ENCODE measurements at regions of chr10 and their contacts with region 1.

Region 1: GRCh38 chr10:128035557-128035973 is 90.7 kb downstream of the MKI67 start:
- DNase-seq: peak; percentile 82
- ATAC-seq: peak; percentile 94
- H3K4me3 Mint-ChIP-seq: no peak overlapping the region
- H3K27ac Mint-ChIP-seq: no peak overlapping the region
- H3K4me1 Mint-ChIP-seq: peaks cover 15% of the 10 kb centered on the region
- H3K27me3 Mint-ChIP-seq: no peaks in the 10 kb centered on the region
- CTCF ChIP-seq: peak; percentile 73

Region 2: DNA sequence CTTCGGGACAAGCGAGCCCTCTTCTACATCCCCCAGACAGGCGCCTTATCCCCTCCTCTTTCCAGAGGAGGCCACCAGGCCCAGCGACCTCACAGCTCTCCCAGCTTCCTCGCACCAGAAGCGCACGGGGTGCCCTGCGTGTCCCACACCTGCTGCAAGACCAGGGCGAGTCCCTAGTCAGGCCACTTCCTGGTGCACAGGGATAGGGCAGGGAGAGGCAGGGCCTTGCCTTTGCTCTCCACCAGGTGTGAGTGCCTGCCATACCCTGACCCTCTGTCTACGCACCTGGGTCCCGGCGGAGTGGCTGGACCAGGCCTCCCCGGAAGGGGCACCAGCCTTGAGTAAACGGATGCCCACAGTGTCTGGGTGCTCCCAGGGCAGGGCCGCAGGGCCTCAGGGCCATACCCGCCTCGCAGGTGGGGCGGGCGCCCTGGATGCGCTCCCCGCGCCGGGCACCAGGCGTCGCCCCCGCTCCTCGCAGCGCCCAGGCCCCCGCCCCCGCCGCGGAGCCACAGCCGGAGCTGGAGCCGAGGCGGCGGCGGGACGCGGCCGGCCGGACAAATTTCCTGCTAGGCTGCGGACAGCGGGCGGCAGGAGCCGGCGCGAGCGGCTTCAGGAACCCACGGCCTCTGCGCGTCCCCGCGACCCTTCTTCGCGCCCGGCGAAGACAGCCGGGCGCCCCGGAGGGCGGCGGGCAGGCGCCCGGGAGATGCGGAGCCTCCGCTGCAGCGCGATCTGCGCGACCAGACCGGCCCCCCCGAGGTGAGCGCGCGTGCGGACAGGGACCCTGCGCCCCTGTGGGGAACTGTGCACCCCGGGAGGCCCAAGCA is 128.8 kb before region 1 on chr10 and contains the start of gene PTPRE:
- CTCF ChIA-PET with region 1: interaction called, 11 read pairs
- POLR2A ChIA-PET with region 1: no interaction called
- DNase-seq: peak; percentile 76
- ATAC-seq: peak; percentile 94
- H3K4me3 Mint-ChIP-seq: peak within 1 kb of the TSS; percentile 52
- H3K27ac Mint-ChIP-seq: no peak within 1 kb of the TSS
- H3K4me1 Mint-ChIP-seq: peaks cover 3% of the 10 kb centered on the region
- H3K27me3 Mint-ChIP-seq: peaks cover 23% of the 10 kb centered on the region
- CTCF ChIP-seq: peak; percentile 65; the same call in 1 of the 2 replicates
- total RNA-seq, gene PTPRE: 1.7 to 3.1 TPM (median 2.0 TPM) in 3 replicates

Region 3: GRCh38 chr10:127990846-127991542 is 44.6 kb before region 1 on chr10:
- CTCF ChIA-PET with region 1: no interaction called
- POLR2A ChIA-PET with region 1: no interaction called
- DNase-seq: no peak
- ATAC-seq: no peak
- H3K4me3 Mint-ChIP-seq: no peak overlapping the region
- H3K27ac Mint-ChIP-seq: no peak overlapping the region
- H3K4me1 Mint-ChIP-seq: peaks cover 6% of the 10 kb centered on the region; the same call in 1 of the 2 replicates
- H3K27me3 Mint-ChIP-seq: no peaks in the 10 kb centered on the region
- CTCF ChIP-seq: no peak

Region 4: DNA sequence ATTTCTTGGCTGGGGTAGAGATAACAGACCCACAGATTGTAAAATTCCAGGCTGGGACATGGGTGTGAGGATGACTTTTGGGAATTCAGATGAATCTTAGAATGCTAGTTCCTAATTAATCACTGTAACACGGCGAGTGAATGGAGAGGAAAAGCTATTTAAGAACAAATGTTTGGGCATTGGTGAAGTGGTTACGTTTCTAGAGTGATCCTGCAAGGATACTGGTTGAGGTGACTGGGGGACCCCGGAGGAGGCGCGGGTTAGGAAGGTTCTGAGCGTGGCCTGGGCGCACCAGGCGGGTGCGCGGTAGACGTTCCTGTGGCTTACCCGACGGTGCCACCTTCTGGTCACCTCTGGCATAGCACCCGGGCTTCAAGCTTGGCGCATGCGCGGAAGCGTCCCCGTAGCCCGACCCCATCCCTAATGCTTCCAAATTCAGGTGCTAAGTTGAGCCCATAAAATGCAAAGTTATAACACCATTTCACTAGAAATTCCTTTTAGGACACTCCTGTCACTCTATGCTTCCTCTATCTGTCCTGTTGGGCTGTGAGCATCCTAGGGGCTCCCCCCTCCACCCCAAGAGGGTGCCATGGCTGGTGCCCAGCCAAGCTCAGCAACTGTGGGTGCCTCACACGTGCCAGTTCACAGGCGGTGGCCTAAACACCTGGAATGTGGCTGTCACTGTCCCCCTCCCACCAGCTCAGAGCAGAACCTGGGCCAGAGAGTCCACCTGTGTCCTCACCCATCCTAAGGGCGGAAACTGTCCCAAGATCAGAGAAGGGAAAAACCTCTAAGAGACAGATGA is 24.2 kb before region 1 on chr10:
- CTCF ChIA-PET with region 1: interaction called, 17 read pairs
- POLR2A ChIA-PET with region 1: no interaction called
- DNase-seq: peak; percentile 88
- ATAC-seq: peak; percentile 93
- H3K4me3 Mint-ChIP-seq: peak overlapping the region; percentile 28; the same call in 1 of the 2 replicates
- H3K27ac Mint-ChIP-seq: no peak overlapping the region
- H3K4me1 Mint-ChIP-seq: peaks cover 2% of the 10 kb centered on the region; the same call in 1 of the 2 replicates
- H3K27me3 Mint-ChIP-seq: peaks cover 6% of the 10 kb centered on the region
- CTCF ChIP-seq: peak; percentile 97

Region 5: GRCh38 chr10:128047351-128047750 is 11.8 kb after region 1 on chr10:
- CTCF ChIA-PET with region 1: interaction called, 50 read pairs
- POLR2A ChIA-PET with region 1: interaction called, 3 read pairs
- DNase-seq: peak; percentile 65
- ATAC-seq: peak; percentile 99
- H3K4me3 Mint-ChIP-seq: no peak overlapping the region
- H3K27ac Mint-ChIP-seq: peak overlapping the region; percentile 45
- H3K4me1 Mint-ChIP-seq: peaks cover 9% of the 10 kb centered on the region
- H3K27me3 Mint-ChIP-seq: peaks cover 6% of the 10 kb centered on the region; the same call in 1 of the 2 replicates
- CTCF ChIP-seq: no peak

Region 6: DNA sequence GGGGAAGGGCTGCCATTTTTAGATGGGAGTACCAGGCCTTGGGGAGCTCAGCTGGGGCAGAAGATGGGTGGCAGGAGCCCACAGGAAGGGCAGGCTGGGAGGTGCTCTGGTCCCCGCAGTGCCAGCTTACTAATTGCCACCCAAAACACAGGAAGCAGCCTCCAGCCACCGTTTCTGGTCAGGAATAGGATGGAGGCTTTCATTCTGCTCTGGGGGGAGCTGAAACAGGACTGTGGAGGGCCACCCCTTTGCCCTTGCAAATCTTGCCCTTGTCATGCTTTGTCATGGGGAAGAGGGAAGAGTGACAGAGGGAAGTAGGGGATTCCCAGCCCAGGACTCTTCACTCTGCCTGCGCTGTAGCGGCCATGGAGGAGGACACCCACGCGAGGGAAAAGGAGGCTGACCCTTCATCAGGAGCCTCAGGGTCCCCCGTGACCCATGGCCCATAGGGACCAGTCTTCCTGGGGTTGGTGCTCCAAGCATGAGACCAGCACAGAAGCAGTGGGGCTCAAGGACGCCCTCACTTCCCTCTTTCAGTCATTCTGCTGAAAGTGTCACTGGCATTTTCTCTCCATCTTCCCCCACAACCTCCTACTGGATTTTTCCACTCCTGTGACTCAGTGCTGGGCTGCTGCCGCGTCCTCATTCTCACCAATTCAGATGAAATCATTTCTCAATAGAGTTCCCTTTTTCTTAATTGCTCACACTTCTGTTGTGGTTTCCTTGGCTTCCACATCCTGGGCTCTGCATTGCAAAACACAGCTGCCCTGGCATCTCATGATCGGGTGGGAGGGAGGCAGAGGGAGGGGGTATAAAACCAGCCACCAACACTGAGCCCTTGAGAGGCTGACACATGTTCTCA is 28.8 kb after region 1 on chr10:
- CTCF ChIA-PET with region 1: interaction called, 125 read pairs
- POLR2A ChIA-PET with region 1: interaction called, 7 read pairs
- DNase-seq: no peak
- ATAC-seq: no peak
- H3K4me3 Mint-ChIP-seq: no peak overlapping the region
- H3K27ac Mint-ChIP-seq: no peak overlapping the region
- H3K4me1 Mint-ChIP-seq: peaks cover 29% of the 10 kb centered on the region
- H3K27me3 Mint-ChIP-seq: no peaks in the 10 kb centered on the region
- CTCF ChIP-seq: no peak

Region 7: GRCh38 chr10:128078136-128078969 is 42.8 kb after region 1 on chr10:
- CTCF ChIA-PET with region 1: interaction called, 14 read pairs
- POLR2A ChIA-PET with region 1: no interaction called
- DNase-seq: peak; percentile 75
- ATAC-seq: peak; percentile 90
- H3K4me3 Mint-ChIP-seq: no peak overlapping the region
- H3K27ac Mint-ChIP-seq: no peak overlapping the region
- H3K4me1 Mint-ChIP-seq: peaks cover 10% of the 10 kb centered on the region; the same call in 1 of the 2 replicates
- H3K27me3 Mint-ChIP-seq: no peaks in the 10 kb centered on the region
- CTCF ChIP-seq: peak; percentile 62

Region 8: GRCh38 chr10:128092454-128092853 is 56.9 kb after region 1 on chr10:
- CTCF ChIA-PET with region 1: interaction called, 11 read pairs
- POLR2A ChIA-PET with region 1: no interaction called
- DNase-seq: no peak
- ATAC-seq: no peak
- H3K4me3 Mint-ChIP-seq: no peak overlapping the region
- H3K27ac Mint-ChIP-seq: no peak overlapping the region
- H3K4me1 Mint-ChIP-seq: peaks cover 15% of the 10 kb centered on the region
- H3K27me3 Mint-ChIP-seq: no peaks in the 10 kb centered on the region
- CTCF ChIP-seq: no peak

Region 9: DNA sequence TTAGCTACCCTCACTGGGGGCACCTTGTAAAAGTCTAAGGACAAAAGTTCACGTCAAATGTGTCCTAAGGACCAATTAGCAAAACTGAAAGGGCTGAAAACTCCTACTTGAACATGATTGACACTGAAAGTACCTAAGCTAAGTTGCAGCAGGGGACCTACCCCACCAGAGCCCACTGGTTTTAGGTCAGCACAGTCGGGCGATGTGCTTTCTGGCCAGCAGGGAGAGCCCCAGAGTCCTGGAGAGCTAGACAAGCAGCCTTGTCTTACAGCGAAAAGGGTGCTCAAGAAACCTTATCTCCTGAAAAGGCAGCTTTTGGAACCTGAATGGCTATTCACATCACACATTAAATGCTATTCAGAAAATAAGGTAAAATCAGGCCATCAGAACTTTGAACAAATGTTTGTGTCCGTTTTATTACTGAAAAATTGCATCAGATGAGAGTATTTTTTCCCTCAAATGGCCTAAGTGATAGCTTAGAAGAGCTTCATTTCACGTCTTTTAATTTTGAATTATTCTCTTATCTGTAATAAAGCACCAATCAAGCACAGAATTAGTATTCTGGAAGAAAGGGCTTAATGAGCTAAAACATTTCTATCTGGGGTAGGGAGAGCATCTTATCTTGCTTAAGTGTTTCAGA is 142.9 kb after region 1 on chr10:
- CTCF ChIA-PET with region 1: no interaction called
- POLR2A ChIA-PET with region 1: no interaction called
- DNase-seq: peak; percentile 78
- ATAC-seq: peak; percentile 99
- H3K4me3 Mint-ChIP-seq: no peak overlapping the region
- H3K27ac Mint-ChIP-seq: no peak overlapping the region
- H3K4me1 Mint-ChIP-seq: peaks cover 13% of the 10 kb centered on the region
- H3K27me3 Mint-ChIP-seq: no peaks in the 10 kb centered on the region; the same call in 1 of the 2 replicates
- CTCF ChIP-seq: no peak

Measured in WTC11 (cell line).